Right cardiac atrium (tissue), 5 donors: ENCODE measurements at regions of chr22 and their contacts with region 1.

Region 1: DNA sequence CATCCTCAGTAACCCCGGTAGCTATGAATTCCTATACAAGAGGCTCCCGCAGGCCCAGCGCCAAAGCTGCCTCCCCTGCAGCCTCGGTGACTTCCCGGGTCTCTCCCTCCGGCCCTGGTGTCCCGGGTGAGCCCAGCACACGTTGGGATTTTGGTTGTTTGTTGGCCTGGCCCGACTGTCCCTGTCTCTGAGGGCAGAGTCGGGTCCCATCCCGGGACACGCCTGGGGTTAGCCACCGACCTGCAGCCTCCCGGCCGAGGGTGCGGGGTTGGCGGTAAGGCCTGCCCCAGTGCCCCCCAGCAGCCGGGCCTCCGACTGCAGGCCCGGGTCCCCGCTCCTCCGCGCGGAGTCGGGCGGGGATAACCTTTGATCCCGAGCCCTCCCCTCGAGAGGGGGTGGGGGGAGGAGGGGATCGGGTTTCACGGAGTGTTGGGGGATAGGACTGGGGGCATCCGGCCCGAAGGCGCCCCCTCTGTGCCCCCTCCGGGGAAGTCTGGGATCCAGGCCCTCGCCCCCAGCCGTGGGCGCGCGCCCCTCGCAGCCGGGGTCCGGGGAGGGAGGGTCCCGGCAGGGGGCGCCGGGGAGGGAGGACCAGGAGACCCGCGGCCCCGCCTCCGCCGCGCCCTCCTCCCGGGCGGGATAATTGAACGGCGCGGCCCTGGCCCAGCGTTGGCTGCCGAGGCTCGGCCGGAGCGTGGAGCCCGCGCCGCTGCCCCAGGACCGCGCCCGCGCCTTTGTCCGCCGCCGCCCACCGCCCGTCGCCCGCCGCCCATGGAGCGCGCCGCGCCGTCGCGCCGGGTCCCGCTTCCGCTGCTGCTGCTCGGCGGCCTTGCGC is at the start of gene FBLN1:
- DNase-seq: peak; percentile 59 to 87 (median 85)
- ATAC-seq: peak; percentile 56 to 69
- H3K4me3 ChIP-seq: peak within 1 kb of the TSS; percentile 49
- H3K27ac ChIP-seq: peak within 1 kb of the TSS; percentile 21
- H3K4me1 ChIP-seq: peaks cover 2% of the 10 kb centered on the region
- H3K27me3 ChIP-seq: no peaks in the 10 kb centered on the region
- total RNA-seq, gene FBLN1: 286 to 456 (median 397) TPM

Region 2: GRCh38 chr22:45413368-45414211 is 88.8 kb before region 1 on chr22 and contains the starts of genes RIBC2 and SMC1B:
- intact Hi-C with region 1: no loop called
- DNase-seq: peak; percentile 84 to 92 (median 91)
- ATAC-seq: peak; percentile 92 to 96
- H3K4me3 ChIP-seq: peak within 1 kb of the TSS; percentile 47
- H3K27ac ChIP-seq: no peak within 1 kb of the TSS
- H3K4me1 ChIP-seq: no peaks in the 10 kb centered on the region
- H3K27me3 ChIP-seq: no peaks in the 10 kb centered on the region
- total RNA-seq, gene RIBC2: 0.29 TPM in 1 of 4 donors, not detected in the others
- total RNA-seq, gene SMC1B: not detected

Region 3: DNA sequence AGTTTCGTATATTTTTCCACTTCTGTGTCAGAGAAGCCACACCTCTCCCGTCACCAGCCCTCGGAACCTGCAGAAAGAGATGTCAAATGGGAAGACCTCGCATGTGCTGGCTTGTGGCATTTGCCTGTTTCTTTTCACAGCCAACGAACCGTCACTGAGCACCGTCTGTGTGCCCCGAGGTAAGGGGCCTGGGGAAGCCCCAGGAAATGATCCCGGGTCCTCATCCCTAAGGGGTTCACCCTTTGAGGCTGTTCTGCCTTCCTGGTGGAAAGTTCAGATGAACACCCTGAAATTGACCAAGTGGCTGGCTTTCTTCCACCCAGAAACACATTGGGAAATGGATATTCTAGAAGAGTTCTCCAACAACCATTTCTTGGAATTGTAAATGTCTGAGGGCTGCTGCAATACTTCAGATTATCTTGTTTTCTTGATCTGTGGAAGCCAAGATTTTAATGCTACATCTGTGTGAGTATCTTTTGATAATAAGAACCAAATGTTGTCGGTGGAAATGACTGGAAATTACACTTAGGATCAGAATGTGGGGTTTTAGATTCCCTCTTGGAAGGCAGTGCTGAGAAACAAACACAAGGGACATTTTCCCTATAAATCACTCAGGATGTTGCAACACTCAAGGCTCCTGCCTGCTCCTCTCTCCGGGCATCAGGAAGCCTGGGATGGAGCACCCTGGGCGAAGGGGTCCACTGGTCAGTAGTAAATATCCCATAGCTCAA is 51.3 kb before region 1 on chr22:
- intact Hi-C with region 1: loop called in 1 of 4 experiments (anchors 10 kb)
- DNase-seq: peak in 2 of 3 donors; percentile 66 to 72
- ATAC-seq: peak; percentile 66 to 70
- H3K4me3 ChIP-seq: no peak overlapping the region
- H3K27ac ChIP-seq: peak overlapping the region; percentile 66
- H3K4me1 ChIP-seq: no peaks in the 10 kb centered on the region
- H3K27me3 ChIP-seq: no peaks in the 10 kb centered on the region

Region 4: DNA sequence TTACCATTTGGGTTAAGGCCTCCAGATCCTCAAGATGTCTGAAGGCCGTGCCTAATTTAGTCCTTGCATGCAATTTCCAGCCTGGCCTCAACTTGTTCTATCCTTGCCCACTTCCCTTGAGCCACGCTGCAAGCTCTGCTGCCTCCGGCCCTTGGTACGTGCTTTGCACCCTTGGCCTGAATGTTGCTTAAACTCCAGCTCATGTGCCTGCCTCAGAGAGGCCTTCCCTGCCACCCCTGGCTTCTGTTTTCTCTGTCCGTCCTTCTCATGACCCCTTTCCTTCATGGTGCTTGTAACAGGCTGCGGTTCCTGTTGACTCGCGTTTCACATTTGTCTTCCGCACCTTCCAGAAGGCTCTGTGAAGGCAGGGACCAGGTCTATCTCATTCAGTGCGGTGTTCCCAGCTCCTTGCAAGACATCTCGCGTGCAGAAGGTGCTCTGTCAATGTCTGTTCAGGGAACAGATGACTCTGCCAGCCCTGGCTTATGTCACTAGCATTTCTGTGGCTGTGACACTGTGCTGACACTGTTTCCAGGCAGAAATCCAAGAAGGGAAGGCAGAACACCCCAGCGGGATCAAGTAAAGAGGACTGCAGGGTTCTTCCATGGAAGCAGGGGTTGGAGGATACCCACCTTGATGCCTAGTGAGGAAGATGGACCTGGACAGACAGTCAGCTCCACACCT is 62.1 kb after region 1 on chr22:
- intact Hi-C with region 1: no loop called
- DNase-seq: peak in 1 of 3 donors; percentile 37
- ATAC-seq: peak; percentile 65 to 66
- H3K4me3 ChIP-seq: no peak overlapping the region
- H3K27ac ChIP-seq: peak overlapping the region; percentile 32
- H3K4me1 ChIP-seq: no peaks in the 10 kb centered on the region
- H3K27me3 ChIP-seq: no peaks in the 10 kb centered on the region